Heart right ventricle (tissue), 16 donors: ENCODE measurements at regions of chrX and their contacts with region 1.

Region 1: DNA sequence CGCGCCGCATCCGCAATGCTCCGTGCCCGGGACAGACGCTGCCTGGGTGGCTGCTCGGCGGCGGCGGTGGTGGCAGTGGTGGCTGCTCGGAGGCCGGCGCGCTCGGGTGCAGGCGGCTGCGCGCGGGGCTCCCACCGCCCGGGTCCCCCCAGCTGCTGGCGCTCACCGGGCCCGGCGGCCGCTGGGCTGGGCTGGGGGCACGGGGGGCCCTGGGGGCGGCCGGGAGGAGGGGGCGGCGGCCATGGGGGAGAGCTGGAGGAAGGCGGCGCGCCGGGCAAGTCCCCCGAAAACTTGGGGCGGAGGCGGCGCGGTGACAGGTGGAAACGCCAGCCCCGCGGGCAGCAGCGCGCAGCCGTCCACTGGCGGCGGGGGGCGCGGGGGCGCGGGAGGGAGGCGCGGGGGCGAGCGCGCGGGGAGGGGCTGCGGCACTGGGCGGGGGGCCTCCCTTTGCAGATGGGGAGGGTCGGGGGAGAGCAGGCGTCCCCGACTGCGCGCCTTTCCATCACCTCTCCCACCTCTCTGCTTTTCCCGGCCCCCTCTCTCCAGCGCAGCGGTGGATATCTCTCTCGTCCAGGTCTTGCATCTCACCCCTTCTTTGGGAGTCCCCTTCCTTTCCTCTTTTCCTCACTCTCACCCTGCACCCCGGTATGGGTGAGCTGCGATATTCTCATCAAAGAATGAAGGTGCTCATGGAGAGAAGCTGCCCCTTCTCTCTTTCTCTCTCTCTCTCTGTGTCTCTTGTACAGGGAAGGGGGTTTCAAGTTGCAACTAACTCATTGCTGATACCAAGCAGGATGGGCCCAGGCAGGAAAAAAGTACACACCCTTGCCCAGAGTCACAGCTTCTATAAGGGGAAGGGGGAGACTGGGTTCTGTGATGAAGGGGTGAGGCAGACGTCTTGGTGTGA is 83.7 kb upstream of the DHRSX start:
- DNase-seq: no peak
- ATAC-seq: no peak
- H3K4me3 ChIP-seq: no peak overlapping the region
- H3K27ac ChIP-seq: no peak overlapping the region
- H3K4me1 ChIP-seq: peaks cover 0 to 24% (median 7%) of the 10 kb centered on the region in 9 donors
- H3K27me3 ChIP-seq: peaks cover 0 to 63% (median 44%) of the 10 kb centered on the region in 7 donors
- CTCF ChIP-seq: no peak

Region 2: DNA sequence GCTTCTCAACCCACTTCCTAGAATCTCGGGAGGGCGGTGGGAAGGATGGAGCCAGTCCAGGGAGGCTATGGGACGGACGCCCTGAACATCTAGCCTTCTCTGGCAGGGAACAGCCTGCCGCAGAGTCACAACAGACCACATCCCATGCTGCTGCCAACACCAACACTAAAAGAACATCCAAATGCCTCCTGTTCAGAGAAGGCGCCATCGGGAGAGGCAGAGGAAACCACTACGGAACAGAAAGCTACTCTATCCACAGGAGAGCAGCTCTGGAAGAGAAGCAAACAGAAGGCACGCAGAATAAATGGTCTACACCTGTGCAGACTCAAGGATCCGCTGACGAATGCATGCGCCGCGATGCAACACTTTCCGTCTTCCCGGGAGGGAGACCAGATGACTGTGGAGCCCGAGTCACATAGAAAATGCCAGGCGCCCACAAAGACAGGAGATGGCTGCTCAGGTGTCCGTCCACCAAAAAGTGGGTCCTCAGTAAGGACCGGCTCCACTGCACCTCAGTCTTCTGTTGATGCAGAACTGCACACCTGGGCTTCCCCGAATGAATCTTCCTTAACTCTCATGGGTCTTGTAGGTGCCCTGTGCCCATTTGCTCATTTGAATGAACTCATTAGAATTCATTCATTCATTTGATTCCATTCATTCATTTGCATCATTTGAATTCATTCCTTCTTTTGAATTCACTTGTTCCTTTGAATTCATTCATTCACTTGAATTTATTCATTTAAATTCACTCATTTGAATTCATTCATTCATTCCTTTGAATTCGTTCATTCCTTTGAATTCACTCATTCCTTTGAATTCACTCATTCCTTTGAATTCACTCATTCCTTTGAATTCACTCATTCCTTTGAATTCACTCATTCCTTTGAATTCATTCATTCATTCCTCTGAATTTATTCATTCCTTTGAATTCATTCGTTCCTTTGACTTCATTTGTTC is 301.1 kb before region 1 on chrX:
- intact Hi-C with region 1: loop called in 2 of 10 experiments (anchors 10 kb)
- DNase-seq: no peak
- ATAC-seq: no peak
- H3K4me3 ChIP-seq: no peak overlapping the region
- H3K27ac ChIP-seq: no peak overlapping the region
- H3K4me1 ChIP-seq: no peaks in the 10 kb centered on the region
- H3K27me3 ChIP-seq: no peaks in the 10 kb centered on the region
- CTCF ChIP-seq: no peak